ENCODE measurements at regions of chr6 and their contacts with region 1.

Region 1: GRCh38 chr6:136158387-136158821 is 91.7 kb downstream of the MTFR2 start:
- DNase-seq: peak; percentile 58 to 73
- ATAC-seq: peak; percentile 70 to 94 (median 90)
- H3K4me3 ChIP-seq: no peak overlapping the region
- H3K27ac ChIP-seq: peak overlapping the region in 9 of 10 donors; percentile 0 to 60 (median 31)
- H3K4me1 ChIP-seq: peaks cover 0 to 46% (median 18%) of the 10 kb centered on the region in 9 donors
- H3K27me3 ChIP-seq: no peaks in the 10 kb centered on the region
- CTCF ChIP-seq: peak in 6 of 9 donors; percentile 18 to 69 (median 39)

Region 2: DNA sequence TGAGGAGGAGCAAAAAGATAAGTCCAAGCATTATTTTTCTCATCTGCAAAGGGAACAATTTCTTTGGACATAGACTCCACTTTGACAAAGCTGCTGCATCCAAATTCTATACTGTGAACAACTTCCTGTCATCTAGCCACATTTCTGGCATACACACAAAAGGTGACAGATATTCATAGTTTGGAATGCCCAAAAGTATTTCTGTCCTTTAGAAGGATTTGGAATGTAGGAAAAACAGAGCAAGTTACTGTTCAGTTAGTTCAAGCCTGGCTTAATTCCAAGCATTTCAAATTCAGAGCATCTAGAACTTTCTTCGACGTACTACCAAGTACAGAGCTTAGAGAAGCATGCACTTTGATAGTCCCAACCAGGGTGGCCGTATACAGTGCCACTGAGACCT is 172.9 kb before region 1 on chr6:
- intact Hi-C with region 1: no loop called
- DNase-seq: no peak
- ATAC-seq: no peak
- H3K4me3 ChIP-seq: no peak overlapping the region
- H3K27ac ChIP-seq: no peak overlapping the region
- H3K4me1 ChIP-seq: no peaks in the 10 kb centered on the region
- H3K27me3 ChIP-seq: no peaks in the 10 kb centered on the region
- CTCF ChIP-seq: no peak

Region 3: GRCh38 chr6:136031982-136032381 is 126.4 kb before region 1 on chr6:
- intact Hi-C with region 1: loop called in 3 of 10 experiments (anchors 5 to 10 kb)
- DNase-seq: peak in 1 of 2 donors; percentile 46
- ATAC-seq: peak in 7 of 8 donors; percentile 46 to 68 (median 53)
- H3K4me3 ChIP-seq: no peak overlapping the region
- H3K27ac ChIP-seq: no peak overlapping the region
- H3K4me1 ChIP-seq: peaks cover 4 to 52% (median 32%) of the 10 kb centered on the region in 9 donors
- H3K27me3 ChIP-seq: no peaks in the 10 kb centered on the region
- CTCF ChIP-seq: peak in 8 of 9 donors; percentile 28 to 72 (median 56)

Region 4: GRCh38 chr6:136077834-136078576 is 80.4 kb before region 1 on chr6:
- intact Hi-C with region 1: no loop called
- DNase-seq: peak in 1 of 2 donors; percentile 14
- ATAC-seq: peak in 5 of 8 donors; percentile 17 to 84 (median 48)
- H3K4me3 ChIP-seq: no peak overlapping the region
- H3K27ac ChIP-seq: peak overlapping the region; percentile 10 to 77 (median 54)
- H3K4me1 ChIP-seq: peaks cover 0 to 53% (median 22%) of the 10 kb centered on the region in 9 donors
- H3K27me3 ChIP-seq: no peaks in the 10 kb centered on the region
- CTCF ChIP-seq: no peak

Region 5: GRCh38 chr6:136226027-136226673 is 67.7 kb after region 1 on chr6:
- intact Hi-C with region 1: no loop called
- DNase-seq: peak in 1 of 2 donors; percentile 50
- ATAC-seq: peak; percentile 63 to 95 (median 86)
- H3K4me3 ChIP-seq: peak overlapping the region in 7 of 10 donors; percentile 16 to 40 (median 34)
- H3K27ac ChIP-seq: peak overlapping the region in 5 of 10 donors; percentile 5 to 36 (median 23)
- H3K4me1 ChIP-seq: peaks cover 0 to 18% (median 5%) of the 10 kb centered on the region in 9 donors
- H3K27me3 ChIP-seq: no peaks in the 10 kb centered on the region
- CTCF ChIP-seq: peak; percentile 99 to 100 (median 100)

Region 6: GRCh38 chr6:136607932-136608772 is 449.7 kb after region 1 on chr6:
- intact Hi-C with region 1: no loop called
- DNase-seq: peak; percentile 26 to 69
- ATAC-seq: peak in 6 of 8 donors; percentile 24 to 64 (median 56)
- H3K4me3 ChIP-seq: no peak overlapping the region
- H3K27ac ChIP-seq: peak overlapping the region in 1 of 10 donors; percentile 58
- H3K4me1 ChIP-seq: peaks cover 0 to 37% (median 16%) of the 10 kb centered on the region in 9 donors
- H3K27me3 ChIP-seq: no peaks in the 10 kb centered on the region
- CTCF ChIP-seq: peak; percentile 40 to 79 (median 72)

Measured in heart right ventricle (tissue), 16 donors.